Activated CD4-positive, alpha-beta memory T cell treated with anti-CD3 and anti-CD28 coated beads for 36 hours (primary cell): ENCODE measurements at regions of chr16 and their contacts with region 1.

Region 1: GRCh38 chr16:11715246-11715947 is 27.3 kb downstream of the TXNDC11 start:
- DNase-seq: no peak
- H3K4me3 Mint-ChIP-seq: no peak overlapping the region
- H3K27ac Mint-ChIP-seq: no peak overlapping the region
- H3K4me1 Mint-ChIP-seq: peaks cover 14% of the 10 kb centered on the region
- H3K27me3 Mint-ChIP-seq: no peaks in the 10 kb centered on the region

Region 2: DNA sequence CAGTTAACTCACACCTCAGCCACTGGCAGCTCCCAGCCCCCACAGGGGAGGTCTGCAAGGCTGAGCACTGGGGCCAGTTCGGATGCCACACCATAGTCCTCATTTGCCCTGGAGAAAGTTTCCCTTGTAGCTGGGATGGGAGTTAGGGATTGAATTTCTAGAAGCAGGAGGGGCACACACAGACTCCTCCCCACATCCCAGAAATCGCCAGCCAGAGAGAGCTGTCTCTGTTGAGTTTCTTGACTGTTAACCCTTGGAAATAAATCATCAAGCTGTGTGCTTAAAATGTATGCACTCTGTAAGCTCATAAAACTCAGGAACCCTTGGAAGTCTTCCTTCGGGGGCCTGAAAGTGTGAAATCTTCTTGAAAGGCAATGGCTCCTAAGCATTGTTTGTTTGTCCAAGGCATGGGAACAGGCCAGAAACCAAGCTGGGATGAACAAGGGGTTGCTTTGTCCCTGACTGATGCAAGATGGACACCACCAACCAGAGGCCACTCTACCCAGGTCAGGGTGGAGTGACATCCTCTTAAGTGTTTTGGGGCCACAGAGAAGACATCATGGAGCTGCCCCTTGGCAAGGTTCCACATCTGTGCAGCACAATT is 441.6 kb before region 1 on chr16:
- CTCF ChIA-PET with region 1: no interaction called
- POLR2A ChIA-PET with region 1: no interaction called
- intact Hi-C with region 1: no loop called
- DNase-seq: no peak
- H3K4me3 Mint-ChIP-seq: no peak overlapping the region
- H3K27ac Mint-ChIP-seq: no peak overlapping the region
- H3K4me1 Mint-ChIP-seq: no peaks in the 10 kb centered on the region
- H3K27me3 Mint-ChIP-seq: no peaks in the 10 kb centered on the region

Region 3: GRCh38 chr16:11396241-11397048 is 319.0 kb before region 1 on chr16:
- CTCF ChIA-PET with region 1: interaction called, 14 read pairs
- POLR2A ChIA-PET with region 1: no interaction called
- intact Hi-C with region 1: loop called (anchors 10 kb)
- DNase-seq: peak; percentile 76
- H3K4me3 Mint-ChIP-seq: no peak overlapping the region
- H3K27ac Mint-ChIP-seq: no peak overlapping the region
- H3K4me1 Mint-ChIP-seq: no peaks in the 10 kb centered on the region
- H3K27me3 Mint-ChIP-seq: no peaks in the 10 kb centered on the region

Region 4: GRCh38 chr16:11526655-11527350 is 188.6 kb before region 1 on chr16:
- CTCF ChIA-PET with region 1: interaction called, 49 read pairs
- POLR2A ChIA-PET with region 1: no interaction called
- intact Hi-C with region 1: loop called (anchors 1 kb)
- DNase-seq: no peak
- H3K4me3 Mint-ChIP-seq: no peak overlapping the region
- H3K27ac Mint-ChIP-seq: no peak overlapping the region
- H3K4me1 Mint-ChIP-seq: no peaks in the 10 kb centered on the region
- H3K27me3 Mint-ChIP-seq: no peaks in the 10 kb centered on the region

Region 5: GRCh38 chr16:11698271-11698689 is 17.1 kb before region 1 on chr16:
- CTCF ChIA-PET with region 1: interaction called, 16 read pairs
- POLR2A ChIA-PET with region 1: no interaction called
- intact Hi-C with region 1: no loop called
- DNase-seq: peak; percentile 62
- H3K4me3 Mint-ChIP-seq: no peak overlapping the region
- H3K27ac Mint-ChIP-seq: peak overlapping the region; percentile 66
- H3K4me1 Mint-ChIP-seq: peaks cover 54% of the 10 kb centered on the region
- H3K27me3 Mint-ChIP-seq: no peaks in the 10 kb centered on the region

Region 6: GRCh38 chr16:11725457-11725856 is 10.1 kb after region 1 on chr16:
- CTCF ChIA-PET with region 1: interaction called, 11 read pairs
- POLR2A ChIA-PET with region 1: no interaction called
- intact Hi-C with region 1: no loop called
- DNase-seq: no peak
- H3K4me3 Mint-ChIP-seq: no peak overlapping the region
- H3K27ac Mint-ChIP-seq: no peak overlapping the region
- H3K4me1 Mint-ChIP-seq: peaks cover 36% of the 10 kb centered on the region
- H3K27me3 Mint-ChIP-seq: no peaks in the 10 kb centered on the region

Region 7: DNA sequence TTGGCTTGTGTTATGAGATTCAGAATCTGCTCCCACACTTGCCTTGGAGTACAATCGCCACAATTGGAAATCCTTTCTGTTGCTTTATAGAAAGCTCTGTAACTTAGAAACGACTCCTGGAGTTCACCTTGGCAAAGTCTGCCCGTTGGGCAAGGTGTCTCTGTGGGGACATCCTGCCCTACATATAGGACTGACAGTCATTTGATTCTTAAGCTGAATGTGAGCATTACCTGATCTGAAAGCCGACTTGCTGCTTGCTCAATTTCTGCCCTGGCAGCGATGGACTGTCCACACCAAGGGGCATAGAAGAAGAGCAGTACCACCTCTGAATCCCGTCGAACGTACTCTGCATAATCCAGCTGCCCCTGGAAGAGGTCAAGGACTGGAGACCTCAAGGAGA is 20.4 kb after region 1 on chr16:
- CTCF ChIA-PET with region 1: interaction called, 11 read pairs
- POLR2A ChIA-PET with region 1: interaction called, 5 read pairs
- intact Hi-C with region 1: no loop called
- DNase-seq: no peak
- H3K4me3 Mint-ChIP-seq: no peak overlapping the region
- H3K27ac Mint-ChIP-seq: no peak overlapping the region
- H3K4me1 Mint-ChIP-seq: peaks cover 58% of the 10 kb centered on the region
- H3K27me3 Mint-ChIP-seq: no peaks in the 10 kb centered on the region

Region 8: GRCh38 chr16:12158428-12158827 is 443.0 kb after region 1 on chr16:
- CTCF ChIA-PET with region 1: no interaction called
- POLR2A ChIA-PET with region 1: no interaction called
- intact Hi-C with region 1: no loop called
- DNase-seq: no peak
- H3K4me3 Mint-ChIP-seq: no peak overlapping the region
- H3K27ac Mint-ChIP-seq: no peak overlapping the region
- H3K4me1 Mint-ChIP-seq: peaks cover 15% of the 10 kb centered on the region
- H3K27me3 Mint-ChIP-seq: no peaks in the 10 kb centered on the region